ENCODE measurements at regions of chr3 and their contacts with region 1.

Region 1: GRCh38 chr3:50292159-50293078 is at the start of gene IFRD2:
- DNase-seq: peak; percentile 93

Region 2: DNA sequence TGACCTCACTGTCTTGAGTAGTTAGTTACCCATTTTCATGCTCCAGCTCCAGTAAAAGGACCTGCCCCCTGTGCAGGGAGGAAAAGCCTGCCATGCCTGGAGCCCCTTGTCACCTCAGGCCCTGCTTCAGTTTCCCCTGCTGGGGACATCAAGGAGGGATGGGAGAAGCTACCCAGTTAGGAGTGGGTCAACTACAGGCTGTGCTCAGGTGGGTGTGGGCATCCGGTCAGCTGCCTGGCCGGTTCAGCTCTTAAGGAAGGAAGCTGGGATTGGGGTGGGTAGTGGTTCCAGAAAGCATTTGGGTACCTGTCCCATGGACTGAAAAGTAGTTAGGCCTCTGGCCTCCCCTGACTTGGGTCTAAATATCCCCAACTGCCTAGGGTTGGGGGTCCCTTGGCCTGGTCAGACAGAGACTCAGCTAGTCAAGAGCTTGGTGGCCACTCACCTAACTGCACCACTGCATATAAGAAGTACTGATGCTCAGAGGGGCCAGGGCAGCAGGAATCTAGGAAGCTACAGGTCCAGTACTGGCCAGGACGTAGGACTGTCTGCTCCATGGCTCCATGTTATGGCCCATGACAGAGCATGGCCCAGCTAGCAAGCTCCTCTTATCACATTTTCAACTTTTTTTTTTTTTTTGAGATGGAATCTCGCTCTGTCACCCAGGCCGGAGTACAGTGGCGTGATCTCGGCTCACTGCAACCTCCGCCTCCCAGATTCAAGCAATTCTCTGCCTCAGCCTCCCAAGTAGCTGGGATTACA is 13.0 kb before region 1 on chr3:
- CTCF ChIA-PET with region 1: interaction called, 3 read pairs
- POLR2A ChIA-PET with region 1: interaction called, 28 read pairs
- DNase-seq: no peak

Measured in HEK293T (cell line).